Spleen (tissue), 13 donors: ENCODE measurements at regions of chr11 and their contacts with region 1.

Region 1: GRCh38 chr11:117226388-117227385 is 5.2 kb downstream of the PCSK7 start:
- DNase-seq: no peak
- H3K4me3 ChIP-seq: no peak overlapping the region
- H3K27ac ChIP-seq: no peak overlapping the region
- H3K4me1 ChIP-seq: peaks cover 25 to 78% (median 59%) of the 10 kb centered on the region in 6 donors
- H3K27me3 ChIP-seq: no peaks in the 10 kb centered on the region
- CTCF ChIP-seq: peak; percentile 70 to 91 (median 87)
- POLR2A ChIP-seq: no peak

Region 2: DNA sequence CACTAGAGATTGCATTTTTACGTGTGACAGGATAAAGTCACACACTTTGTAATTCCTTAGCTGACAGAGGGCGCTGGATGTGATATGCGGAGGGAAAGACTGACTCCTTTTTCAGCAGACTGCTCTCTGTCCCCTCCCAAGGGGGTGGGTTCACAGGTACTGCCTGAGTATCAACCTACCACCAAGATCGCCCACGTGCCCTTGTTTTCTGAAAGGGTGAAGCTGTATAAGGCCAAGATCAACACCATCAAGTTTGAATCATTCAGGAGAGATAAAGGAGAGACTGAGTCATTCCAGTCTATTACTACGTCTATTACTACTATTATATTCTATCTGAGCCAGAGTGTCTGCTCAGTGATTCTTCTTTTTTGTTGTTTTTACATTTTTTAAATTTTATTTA is 484.6 kb before region 1 on chr11:
- intact Hi-C with region 1: no loop called
- DNase-seq: no peak
- H3K4me3 ChIP-seq: no peak overlapping the region
- H3K27ac ChIP-seq: peak overlapping the region in 4 of 8 donors; percentile 12 to 33 (median 26)
- H3K4me1 ChIP-seq: peaks cover 0 to 6% (median 0%) of the 10 kb centered on the region in 6 donors
- H3K27me3 ChIP-seq: no peaks in the 10 kb centered on the region
- CTCF ChIP-seq: no peak
- POLR2A ChIP-seq: no peak

Region 3: GRCh38 chr11:116879800-116880625 is 346.7 kb before region 1 on chr11:
- intact Hi-C with region 1: loop called (anchors 10 kb)
- DNase-seq: no peak
- H3K4me3 ChIP-seq: no peak overlapping the region
- H3K27ac ChIP-seq: no peak overlapping the region
- H3K4me1 ChIP-seq: peaks cover 0 to 17% (median 3%) of the 10 kb centered on the region in 6 donors
- H3K27me3 ChIP-seq: no peaks in the 10 kb centered on the region
- CTCF ChIP-seq: peak in 10 of 11 experiments; percentile 18 to 81 (median 65)
- POLR2A ChIP-seq: no peak

Region 4: GRCh38 chr11:117143871-117144476 is 82.7 kb before region 1 on chr11 and contains the start of gene PAFAH1B2:
- intact Hi-C with region 1: no loop called
- DNase-seq: peak; percentile 99
- H3K4me3 ChIP-seq: peak within 1 kb of the TSS; percentile 82 to 98 (median 94)
- H3K27ac ChIP-seq: peak within 1 kb of the TSS; percentile 88 to 97 (median 93)
- H3K4me1 ChIP-seq: peaks cover 10 to 55% (median 42%) of the 10 kb centered on the region in 6 donors
- H3K27me3 ChIP-seq: no peaks in the 10 kb centered on the region
- CTCF ChIP-seq: peak in 2 of 11 experiments; percentile 14 to 24
- POLR2A ChIP-seq: peak in 2 of 3 donors; percentile 22 to 73
- total RNA-seq, gene PAFAH1B2: 58.6 to 80.4 (median 67.2) TPM